Common myeloid progenitor, CD34-positive (primary cell): ENCODE measurements at regions of chr17 and their contacts with region 1.

Region 1: GRCh38 chr17:82320956-82321927 is 3.8 kb upstream of the CD7 start:
- DNase-seq: peak in 2 of 3 donors; percentile 69 to 70
- H3K4me3 ChIP-seq: peak overlapping the region in 1 of 7 experiments; percentile 52
- H3K27ac ChIP-seq: no peak overlapping the region
- H3K4me1 ChIP-seq: peaks cover 0 to 27% (median 16%) of the 10 kb centered on the region in 4 experiments
- H3K27me3 ChIP-seq: no peaks in the 10 kb centered on the region

Region 2: DNA sequence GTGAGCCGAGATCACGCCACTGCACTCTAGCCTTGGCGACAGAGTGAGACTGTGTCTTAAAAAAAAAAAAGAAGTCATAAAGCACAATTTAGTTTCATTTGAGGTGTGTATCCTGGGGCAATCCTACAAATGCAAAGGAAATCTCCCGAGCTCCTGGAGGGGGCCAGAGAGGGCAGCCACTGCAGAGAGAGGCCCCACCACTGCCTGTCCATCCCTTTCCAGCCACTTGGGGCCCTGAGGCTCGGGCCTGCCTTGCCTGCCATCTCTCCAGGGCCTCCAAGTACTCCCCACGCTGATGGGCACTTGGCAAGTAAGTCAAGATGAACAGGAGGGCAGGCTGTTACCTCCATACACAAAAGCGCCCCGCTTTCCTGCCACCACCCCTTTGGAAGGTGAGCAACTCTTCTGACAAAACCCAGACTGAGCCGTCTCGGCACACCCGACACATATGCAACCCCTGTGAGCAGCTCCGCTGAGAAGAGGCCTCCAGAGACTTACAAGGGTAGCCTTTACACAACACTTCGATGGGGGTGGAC is 69.2 kb before region 1 on chr17:
- CTCF ChIA-PET with region 1: no interaction called
- POLR2A ChIA-PET with region 1: no interaction called
- DNase-seq: no peak
- H3K4me3 ChIP-seq: no peak overlapping the region
- H3K27ac ChIP-seq: no peak overlapping the region
- H3K4me1 ChIP-seq: peaks cover 0 to 14% (median 9%) of the 10 kb centered on the region in 4 experiments
- H3K27me3 ChIP-seq: no peaks in the 10 kb centered on the region

Region 3: DNA sequence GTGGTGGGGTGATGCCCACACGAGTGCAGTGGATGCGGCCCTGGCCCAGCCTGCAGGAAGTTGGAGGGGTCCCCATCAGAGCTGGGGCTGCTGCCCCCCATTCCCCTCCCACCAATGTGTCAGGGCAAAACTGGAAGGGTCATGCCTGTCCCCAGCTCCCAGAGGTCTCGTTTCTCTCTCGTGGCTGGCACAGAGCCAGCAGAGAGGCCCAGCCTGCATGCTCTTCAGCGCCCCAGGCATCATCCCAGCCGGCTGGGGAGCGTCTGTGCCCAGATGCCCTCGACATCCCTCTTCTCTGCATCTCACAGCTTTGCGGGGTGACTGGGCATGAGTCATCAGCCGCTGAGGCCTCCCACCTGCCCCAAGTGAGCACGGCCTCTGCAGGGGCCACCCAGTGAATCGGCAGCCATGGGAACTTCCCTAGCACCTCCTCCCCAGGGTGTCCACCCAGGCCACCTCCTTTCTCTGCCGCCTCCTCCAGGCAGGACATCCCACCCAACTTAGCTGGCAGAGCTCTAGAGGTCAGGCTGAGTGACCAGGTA is 38.0 kb before region 1 on chr17:
- CTCF ChIA-PET with region 1: no interaction called
- POLR2A ChIA-PET with region 1: no interaction called
- DNase-seq: peak; percentile 47 to 90 (median 88)
- H3K4me3 ChIP-seq: no peak overlapping the region
- H3K27ac ChIP-seq: no peak overlapping the region
- H3K4me1 ChIP-seq: peaks cover 0 to 19% (median 11%) of the 10 kb centered on the region in 4 experiments
- H3K27me3 ChIP-seq: no peaks in the 10 kb centered on the region

Region 4: GRCh38 chr17:82332669-82333278 is 11.5 kb after region 1 on chr17:
- CTCF ChIA-PET with region 1: interaction called, 18 read pairs
- POLR2A ChIA-PET with region 1: no interaction called
- DNase-seq: peak; percentile 57 to 86 (median 82)
- H3K4me3 ChIP-seq: peak overlapping the region in 5 of 7 experiments; percentile 2 to 72 (median 56)
- H3K27ac ChIP-seq: peak overlapping the region in 1 of 2 experiments; percentile 76
- H3K4me1 ChIP-seq: peaks cover 0 to 48% (median 48%) of the 10 kb centered on the region in 4 experiments
- H3K27me3 ChIP-seq: peaks cover 0 to 7% (median 0%) of the 10 kb centered on the region in 5 experiments